CD8-positive, alpha-beta T cell (primary cell): ENCODE measurements at regions of chr21 and their contacts with region 1.

Region 1: GRCh38 chr21:44551340-44551961 is at the start of gene KRTAP10-2:
- DNase-seq: peak in 1 of 9 experiments; percentile 36
- ATAC-seq: no peak
- H3K4me3 ChIP-seq: no peak within 1 kb of the TSS
- H3K4me3 Mint-ChIP-seq: no peak within 1 kb of the TSS
- H3K27ac ChIP-seq: no peak within 1 kb of the TSS
- H3K27ac Mint-ChIP-seq: no peak within 1 kb of the TSS
- H3K4me1 ChIP-seq: peaks cover 26% of the 10 kb centered on the region
- H3K4me1 Mint-ChIP-seq: peaks cover 30% of the 10 kb centered on the region
- H3K27me3 ChIP-seq: no peaks in the 10 kb centered on the region
- H3K27me3 Mint-ChIP-seq: no peaks in the 10 kb centered on the region
- CTCF ChIP-seq: no peak
- total RNA-seq, gene KRTAP10-2: not detected

Region 2: GRCh38 chr21:44051462-44051941 is 499.9 kb before region 1 on chr21:
- CTCF ChIA-PET with region 1: no interaction called
- POLR2A ChIA-PET with region 1: no interaction called
- intact Hi-C with region 1: no loop called
- DNase-seq: peak in 3 of 9 experiments; percentile 25 to 47 (median 32)
- ATAC-seq: no peak
- H3K4me3 ChIP-seq: no peak overlapping the region
- H3K4me3 Mint-ChIP-seq: no peak overlapping the region
- H3K27ac ChIP-seq: no peak overlapping the region
- H3K27ac Mint-ChIP-seq: no peak overlapping the region
- H3K4me1 ChIP-seq: no peaks in the 10 kb centered on the region
- H3K4me1 Mint-ChIP-seq: peaks cover 25% of the 10 kb centered on the region
- H3K27me3 ChIP-seq: no peaks in the 10 kb centered on the region
- H3K27me3 Mint-ChIP-seq: no peaks in the 10 kb centered on the region
- CTCF ChIP-seq: no peak

Region 3: DNA sequence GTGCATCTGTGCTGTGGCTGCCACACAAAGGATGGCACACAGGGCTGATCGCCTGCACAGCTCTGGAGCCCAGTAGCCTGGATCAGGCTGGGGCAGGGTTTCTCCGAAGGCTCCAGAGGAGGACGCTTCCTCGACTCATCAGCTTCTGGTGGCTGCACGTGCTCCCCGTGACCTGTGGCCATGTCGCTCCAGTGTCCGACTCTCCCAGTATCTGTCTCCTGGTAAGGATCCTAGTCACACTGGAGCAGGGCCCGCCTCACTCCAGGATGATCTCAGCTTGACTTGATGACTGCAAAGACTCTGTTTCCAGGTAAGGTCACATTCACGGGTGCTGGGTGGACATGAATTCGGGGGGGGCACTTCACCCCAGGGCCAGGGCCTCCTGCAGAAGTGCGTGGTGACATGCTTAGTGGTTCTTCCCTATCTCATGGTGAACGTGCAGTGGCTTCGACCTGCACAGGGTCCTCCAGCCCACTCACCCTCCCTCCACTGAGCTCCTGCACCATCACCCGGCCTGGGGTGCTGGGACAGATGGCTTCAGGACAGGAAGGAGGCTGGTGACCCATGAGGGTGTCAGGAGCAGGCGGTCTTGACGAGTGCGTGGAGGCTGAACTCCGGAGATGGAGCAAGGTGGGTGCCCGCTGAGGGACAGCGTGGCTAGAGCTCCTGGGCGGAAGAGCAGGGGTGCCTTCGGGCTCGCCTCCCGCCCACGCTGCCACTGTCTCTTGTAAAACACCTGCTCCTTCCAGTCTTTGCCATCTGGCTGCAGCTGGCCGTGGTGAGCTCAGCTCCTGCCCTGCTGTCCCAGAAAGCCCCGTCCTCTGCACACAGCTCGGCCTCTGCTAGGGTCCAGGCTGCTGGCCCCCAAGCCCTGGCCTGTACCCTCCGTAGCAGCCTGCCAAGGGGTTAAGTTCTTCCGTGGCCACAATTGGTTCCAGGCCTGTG is 20.0 kb before region 1 on chr21:
- CTCF ChIA-PET with region 1: no interaction called
- POLR2A ChIA-PET with region 1: no interaction called
- intact Hi-C with region 1: no loop called
- DNase-seq: peak in 1 of 9 experiments; percentile 3
- ATAC-seq: no peak
- H3K4me3 ChIP-seq: no peak overlapping the region
- H3K4me3 Mint-ChIP-seq: no peak overlapping the region
- H3K27ac ChIP-seq: no peak overlapping the region
- H3K27ac Mint-ChIP-seq: no peak overlapping the region
- H3K4me1 ChIP-seq: no peaks in the 10 kb centered on the region
- H3K4me1 Mint-ChIP-seq: no peaks in the 10 kb centered on the region
- H3K27me3 ChIP-seq: no peaks in the 10 kb centered on the region
- H3K27me3 Mint-ChIP-seq: peaks cover 6% of the 10 kb centered on the region
- CTCF ChIP-seq: no peak

Region 4: GRCh38 chr21:44618504-44618903 is 67.1 kb after region 1 on chr21:
- CTCF ChIA-PET with region 1: no interaction called
- POLR2A ChIA-PET with region 1: interaction called, 7 read pairs
- intact Hi-C with region 1: loop called in 1 of 2 experiments (anchors 5 kb)
- DNase-seq: peak in 2 of 9 experiments; percentile 44 to 51
- ATAC-seq: peak; percentile 46
- H3K4me3 ChIP-seq: peak overlapping the region; percentile 6 to 12
- H3K4me3 Mint-ChIP-seq: peak overlapping the region; percentile 35
- H3K27ac ChIP-seq: peak overlapping the region; percentile 33 to 85
- H3K27ac Mint-ChIP-seq: peak overlapping the region; percentile 92
- H3K4me1 ChIP-seq: peaks cover 45% of the 10 kb centered on the region
- H3K4me1 Mint-ChIP-seq: peaks cover 57% of the 10 kb centered on the region
- H3K27me3 ChIP-seq: no peaks in the 10 kb centered on the region
- H3K27me3 Mint-ChIP-seq: no peaks in the 10 kb centered on the region
- CTCF ChIP-seq: no peak

Region 5: DNA sequence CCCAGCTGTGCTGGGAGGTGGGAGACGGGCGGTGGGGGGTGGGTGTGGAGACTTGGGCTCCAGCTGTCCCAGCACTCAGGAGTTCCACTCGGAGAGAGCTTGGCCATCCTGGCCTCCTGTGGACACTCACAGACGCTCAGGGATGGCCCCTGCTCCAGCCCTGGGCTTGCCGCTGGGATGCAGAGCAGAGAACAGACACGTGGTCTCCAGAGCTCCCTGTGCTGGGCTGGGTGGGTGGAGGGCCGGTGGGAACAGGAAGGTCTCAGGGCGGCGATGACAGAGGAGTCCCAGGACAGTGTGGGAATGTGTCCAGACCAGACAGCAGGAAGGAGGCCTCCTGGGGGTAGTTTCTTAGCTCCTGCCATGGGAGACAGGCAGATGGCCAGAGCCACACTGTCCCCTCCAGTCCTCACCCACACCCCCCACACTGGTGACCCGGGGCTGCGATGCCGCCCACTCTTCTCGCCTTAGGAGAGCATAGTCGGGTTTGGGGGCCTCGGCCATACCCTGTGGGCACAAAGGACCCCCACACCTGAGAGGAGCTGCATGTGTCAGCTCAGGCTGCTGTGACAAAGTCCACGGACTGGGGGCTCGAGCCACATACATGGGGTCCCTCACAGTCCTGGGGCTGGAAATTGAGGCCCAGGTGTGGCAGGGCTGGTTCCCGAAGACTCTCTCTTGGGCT is 77.4 kb after region 1 on chr21:
- CTCF ChIA-PET with region 1: no interaction called
- POLR2A ChIA-PET with region 1: interaction called, 3 read pairs
- intact Hi-C with region 1: loop called in 1 of 2 experiments (anchors 2 kb)
- DNase-seq: peak in 1 of 9 experiments; percentile 48
- ATAC-seq: no peak
- H3K4me3 ChIP-seq: no peak overlapping the region
- H3K4me3 Mint-ChIP-seq: no peak overlapping the region
- H3K27ac ChIP-seq: peak overlapping the region in 1 of 2 experiments; percentile 63
- H3K27ac Mint-ChIP-seq: no peak overlapping the region
- H3K4me1 ChIP-seq: peaks cover 51% of the 10 kb centered on the region
- H3K4me1 Mint-ChIP-seq: peaks cover 41% of the 10 kb centered on the region
- H3K27me3 ChIP-seq: no peaks in the 10 kb centered on the region
- H3K27me3 Mint-ChIP-seq: no peaks in the 10 kb centered on the region
- CTCF ChIP-seq: no peak

Region 6: DNA sequence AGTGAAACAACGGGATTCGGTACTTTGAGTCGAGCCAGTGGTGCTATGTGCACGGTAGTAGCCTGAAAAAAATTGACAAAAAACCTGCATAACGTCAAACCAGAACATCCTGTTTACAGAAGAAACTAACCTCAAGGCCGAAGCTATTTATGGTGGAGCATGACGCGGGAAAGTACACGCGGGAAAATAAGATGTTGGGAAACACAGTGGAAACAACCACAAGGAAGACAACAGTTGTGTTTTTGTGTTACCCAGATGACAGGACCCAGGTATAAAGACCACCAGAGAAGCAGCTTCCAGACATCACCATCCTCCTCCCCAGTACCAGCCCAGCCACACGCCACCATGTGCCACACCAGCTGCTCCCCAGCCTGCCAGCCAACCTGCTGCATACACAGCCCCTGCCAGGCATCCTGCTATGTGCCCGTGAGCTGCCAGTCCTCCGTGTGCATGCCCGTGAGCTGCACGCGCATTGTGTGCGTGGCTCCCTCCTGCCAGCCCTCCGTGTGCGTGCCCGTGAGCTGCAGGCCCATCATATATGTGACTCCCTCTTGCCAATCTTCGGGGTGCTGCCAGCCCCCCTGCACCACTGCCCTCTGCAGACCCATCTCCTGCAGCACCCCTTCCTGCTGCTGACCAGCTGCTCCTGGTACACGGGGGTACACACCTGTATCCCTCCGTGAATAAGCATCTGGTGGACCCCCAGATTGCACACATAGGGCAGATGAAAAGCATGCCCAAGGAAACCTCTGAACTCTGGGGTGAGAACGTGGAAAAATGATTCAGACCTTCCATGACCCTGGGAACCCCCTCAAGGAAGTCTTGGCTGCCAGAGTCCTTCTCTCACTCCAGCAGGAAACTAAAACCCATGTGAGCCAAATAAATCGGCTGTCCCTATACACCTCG is 106.4 kb after region 1 on chr21 and contains the start of gene KRTAP12-3:
- CTCF ChIA-PET with region 1: interaction called, 3 read pairs
- POLR2A ChIA-PET with region 1: interaction called, 10 read pairs
- intact Hi-C with region 1: loop called (anchors 10 kb)
- DNase-seq: peak; percentile 45 to 95 (median 70)
- ATAC-seq: peak; percentile 64
- H3K4me3 ChIP-seq: peak within 1 kb of the TSS; percentile 9 to 31
- H3K4me3 Mint-ChIP-seq: peak within 1 kb of the TSS; percentile 66
- H3K27ac ChIP-seq: peak within 1 kb of the TSS; percentile 63 to 88
- H3K27ac Mint-ChIP-seq: peak within 1 kb of the TSS; percentile 96
- H3K4me1 ChIP-seq: peaks cover 65% of the 10 kb centered on the region
- H3K4me1 Mint-ChIP-seq: peaks cover 68% of the 10 kb centered on the region
- H3K27me3 ChIP-seq: no peaks in the 10 kb centered on the region
- H3K27me3 Mint-ChIP-seq: no peaks in the 10 kb centered on the region
- CTCF ChIP-seq: no peak
- total RNA-seq, gene KRTAP12-3: 1.3 TPM in 1 of 2 experiments, not detected in the other

Region 7: GRCh38 chr21:44723177-44724131 is 172.0 kb after region 1 on chr21:
- CTCF ChIA-PET with region 1: no interaction called
- POLR2A ChIA-PET with region 1: interaction called, 3 read pairs
- intact Hi-C with region 1: loop called in 1 of 2 experiments (anchors 10 kb)
- DNase-seq: peak in 5 of 9 experiments; percentile 29 to 64 (median 56)
- ATAC-seq: peak; percentile 55
- H3K4me3 ChIP-seq: peak overlapping the region; percentile 25 to 55
- H3K4me3 Mint-ChIP-seq: peak overlapping the region; percentile 78
- H3K27ac ChIP-seq: peak overlapping the region in 1 of 2 experiments; percentile 15
- H3K27ac Mint-ChIP-seq: peak overlapping the region; percentile 32
- H3K4me1 ChIP-seq: peaks cover 19% of the 10 kb centered on the region
- H3K4me1 Mint-ChIP-seq: peaks cover 12% of the 10 kb centered on the region
- H3K27me3 ChIP-seq: peaks cover 0 to 25% of the 10 kb centered on the region in 2 experiments
- H3K27me3 Mint-ChIP-seq: peaks cover 13% of the 10 kb centered on the region
- CTCF ChIP-seq: no peak

Region 8: GRCh38 chr21:44865561-44866280 is 314.3 kb after region 1 on chr21:
- CTCF ChIA-PET with region 1: no interaction called
- POLR2A ChIA-PET with region 1: no interaction called
- intact Hi-C with region 1: no loop called
- DNase-seq: peak in 2 of 9 experiments; percentile 38 to 53
- ATAC-seq: peak; percentile 33
- H3K4me3 ChIP-seq: no peak overlapping the region
- H3K4me3 Mint-ChIP-seq: peak overlapping the region; percentile 24
- H3K27ac ChIP-seq: peak overlapping the region in 1 of 2 experiments; percentile 17
- H3K27ac Mint-ChIP-seq: peak overlapping the region; percentile 75
- H3K4me1 ChIP-seq: peaks cover 52% of the 10 kb centered on the region
- H3K4me1 Mint-ChIP-seq: peaks cover 69% of the 10 kb centered on the region
- H3K27me3 ChIP-seq: no peaks in the 10 kb centered on the region
- H3K27me3 Mint-ChIP-seq: no peaks in the 10 kb centered on the region
- CTCF ChIP-seq: no peak